ENCODE measurements at regions of chr18 and their contacts with region 1.

Region 1: DNA sequence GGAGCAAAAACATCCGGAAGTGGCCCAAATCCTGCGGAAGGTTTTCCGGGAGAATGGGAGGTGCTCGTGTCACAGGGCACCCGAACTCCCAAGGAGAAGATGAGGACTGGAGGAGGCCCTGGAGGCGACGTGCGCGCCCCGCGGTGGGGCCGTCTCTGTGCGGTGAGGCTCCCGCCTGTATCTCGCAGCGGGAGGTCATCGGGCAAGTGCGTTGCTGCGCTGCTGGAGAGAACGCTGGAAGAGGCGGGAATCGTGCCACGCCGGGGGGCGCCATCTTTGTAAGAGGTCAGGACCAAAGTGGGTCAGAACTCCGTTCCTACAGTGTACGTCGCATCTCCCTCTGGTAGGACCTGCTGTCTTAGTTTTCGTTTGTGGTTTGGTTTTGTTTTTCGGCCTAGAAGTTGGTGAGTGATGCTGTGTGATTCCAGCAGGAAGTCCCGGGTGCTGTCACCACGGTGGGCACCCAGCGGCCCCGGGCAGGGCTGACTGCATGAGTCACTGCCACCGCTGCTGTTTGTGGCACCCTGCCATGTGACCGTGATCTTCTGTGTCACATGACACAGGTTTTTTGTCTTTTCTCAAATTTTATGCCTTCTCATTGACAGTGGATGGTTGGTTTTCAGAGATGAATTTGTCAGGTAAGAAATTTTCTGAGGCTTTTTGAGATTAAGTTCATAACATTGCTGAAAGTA is 21.5 kb upstream of the ATP9B start:
- DNase-seq: peak in 4 of 35 experiments; percentile 9 to 14 (median 13)
- ATAC-seq: no peak
- H3K4me3 ChIP-seq: no peak overlapping the region
- H3K4me3 Mint-ChIP-seq: no peak overlapping the region
- H3K27ac ChIP-seq: no peak overlapping the region
- H3K27ac Mint-ChIP-seq: no peak overlapping the region
- H3K4me1 ChIP-seq: no peaks in the 10 kb centered on the region
- H3K4me1 Mint-ChIP-seq: no peaks in the 10 kb centered on the region
- H3K27me3 ChIP-seq: peaks cover 0 to 5% of the 10 kb centered on the region in 2 experiments
- H3K27me3 Mint-ChIP-seq: peaks cover 0 to 6% of the 10 kb centered on the region in 2 donors

Region 2: GRCh38 chr18:79092874-79093273 is 45.2 kb after region 1 on chr18:
- CTCF ChIA-PET with region 1: no interaction called
- POLR2A ChIA-PET with region 1: interaction called in 1 of 2 experiments, 13 read pairs
- DNase-seq: no peak
- ATAC-seq: no peak
- H3K4me3 ChIP-seq: no peak overlapping the region
- H3K4me3 Mint-ChIP-seq: no peak overlapping the region
- H3K27ac ChIP-seq: no peak overlapping the region
- H3K27ac Mint-ChIP-seq: no peak overlapping the region
- H3K4me1 ChIP-seq: peaks cover 2 to 9% of the 10 kb centered on the region in 2 experiments
- H3K4me1 Mint-ChIP-seq: peaks cover 56 to 65% (median 58%) of the 10 kb centered on the region in 3 donors
- H3K27me3 ChIP-seq: no peaks in the 10 kb centered on the region
- H3K27me3 Mint-ChIP-seq: no peaks in the 10 kb centered on the region